GM12878 (cell line): ENCODE measurements at regions of chr1 and their contacts with region 1.

Region 1: DNA sequence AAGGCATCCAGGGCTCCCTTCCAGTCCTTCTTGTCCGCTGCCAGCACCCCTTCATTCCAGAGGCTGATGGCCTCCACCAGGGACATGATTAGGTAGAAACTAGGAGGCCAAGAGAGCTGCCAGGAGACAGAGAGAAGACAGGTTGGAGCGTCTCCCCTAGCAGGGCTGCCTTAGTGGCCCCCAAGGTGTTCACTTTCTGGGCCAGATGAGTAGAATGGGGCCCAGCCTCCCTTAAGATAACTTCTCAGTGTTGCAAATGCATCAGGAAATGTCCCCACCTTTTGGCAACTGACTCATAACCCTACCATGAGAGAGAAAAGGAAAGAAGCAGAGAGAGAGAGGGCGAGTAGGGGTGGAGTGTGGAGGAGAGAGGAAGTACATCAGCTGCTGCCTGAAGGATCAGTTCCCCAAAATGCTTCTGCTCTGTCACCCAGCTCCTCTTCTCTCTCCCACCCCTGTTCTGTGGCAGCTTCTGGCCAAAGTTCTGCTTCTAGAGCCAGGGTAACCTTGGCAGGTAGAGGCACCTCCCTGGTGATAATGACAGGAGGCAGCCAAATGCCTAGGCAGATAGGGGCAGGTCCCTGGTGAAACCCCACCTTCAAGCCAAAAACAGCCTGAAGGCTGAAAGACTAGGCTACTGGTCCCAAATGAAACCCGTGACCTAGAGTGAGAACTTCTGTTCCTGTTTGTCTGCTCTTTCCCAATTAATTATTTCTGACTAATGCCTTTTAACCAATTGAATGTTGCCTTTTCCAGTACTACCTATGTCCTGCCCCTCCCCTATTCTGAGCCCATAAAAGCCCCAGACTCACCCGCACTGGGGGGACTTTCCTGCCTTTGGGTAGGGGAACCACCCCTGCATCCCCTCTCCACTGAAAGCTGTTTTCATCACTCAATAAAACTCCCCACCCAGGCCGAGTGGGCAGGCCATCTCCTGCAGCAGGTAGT is at the start of gene NCF2:
- DNase-seq: peak; percentile 96
- ATAC-seq: peak; percentile 79
- H3K4me3 ChIP-seq: peak within 1 kb of the TSS; percentile 73
- H3K27ac ChIP-seq: peak within 1 kb of the TSS; percentile 95
- H3K4me1 ChIP-seq: peaks cover 48% of the 10 kb centered on the region
- H3K27me3 ChIP-seq: no peaks in the 10 kb centered on the region
- CTCF ChIP-seq: no peak
- EP300 ChIP-seq: peak; percentile 74 to 93
- POLR2A ChIP-seq: peak; percentile 64
- RAD21 ChIP-seq: peak; percentile 46; the same call in 1 of the 2 replicates
- polyA plus RNA-seq, gene NCF2: 31.4 to 61.2 TPM

Region 2: DNA sequence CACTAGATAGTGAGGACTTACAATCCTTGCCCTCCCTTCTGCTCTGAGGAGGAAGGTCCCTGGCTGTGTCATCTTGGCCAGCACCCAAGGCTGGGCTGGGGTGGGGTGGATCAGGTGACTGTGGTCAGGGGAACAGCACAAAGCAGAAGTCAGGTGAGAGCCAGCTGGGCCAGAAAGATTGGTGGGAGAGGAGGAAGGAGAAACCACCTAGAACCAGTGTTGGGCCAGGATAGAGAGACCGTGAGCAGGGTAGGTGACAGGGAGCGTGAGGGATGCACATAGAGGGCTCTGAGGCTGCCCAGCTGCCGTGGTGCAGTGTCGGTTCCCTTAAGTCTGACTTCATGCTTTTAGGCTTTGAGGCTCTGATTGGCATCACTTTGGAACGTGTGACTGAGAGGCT is 22.9 kb before region 1 on chr1:
- CTCF ChIA-PET with region 1: interaction called, 5 read pairs
- POLR2A ChIA-PET with region 1: interaction called, 4 read pairs
- RAD21 ChIA-PET with region 1: interaction called, 10 read pairs
- SMC1A ChIA-PET with region 1: interaction called, 37 read pairs
- in situ Hi-C with region 1: no loop called
- intact Hi-C with region 1: no loop called
- DNase-seq: peak; percentile 17
- ATAC-seq: peak; percentile 80
- H3K4me3 ChIP-seq: no peak overlapping the region
- H3K27ac ChIP-seq: no peak overlapping the region
- H3K4me1 ChIP-seq: peaks cover 9% of the 10 kb centered on the region
- H3K27me3 ChIP-seq: no peaks in the 10 kb centered on the region
- CTCF ChIP-seq: no peak
- EP300 ChIP-seq: no peak
- POLR2A ChIP-seq: no peak
- RAD21 ChIP-seq: no peak

Region 3: DNA sequence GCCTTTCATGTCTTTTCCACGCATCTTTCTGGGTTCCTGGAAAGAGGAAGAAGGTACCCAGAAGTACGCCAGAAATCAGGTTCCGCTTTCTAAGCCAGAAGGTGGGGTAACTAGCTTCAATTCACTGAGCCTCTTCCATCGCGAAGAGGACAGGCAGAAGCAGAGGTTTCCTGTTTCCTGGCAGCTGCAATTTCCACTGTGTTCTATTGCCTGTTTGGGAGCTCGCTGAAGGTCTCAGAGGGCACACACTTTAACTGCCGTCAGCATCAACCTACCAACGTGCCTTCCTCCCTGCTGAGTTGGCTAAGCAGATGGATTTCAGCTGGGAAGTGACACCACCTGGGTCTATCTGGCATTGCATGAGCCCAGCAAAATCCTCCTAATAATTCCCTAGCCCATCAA is 10.2 kb before region 1 on chr1:
- CTCF ChIA-PET with region 1: interaction called, 18 read pairs
- POLR2A ChIA-PET with region 1: interaction called, 13 read pairs
- RAD21 ChIA-PET with region 1: interaction called, 12 read pairs
- SMC1A ChIA-PET with region 1: interaction called, 50 read pairs
- in situ Hi-C with region 1: no loop called
- intact Hi-C with region 1: no loop called
- DNase-seq: no peak
- ATAC-seq: peak; percentile 63
- H3K4me3 ChIP-seq: no peak overlapping the region
- H3K27ac ChIP-seq: no peak overlapping the region
- H3K4me1 ChIP-seq: peaks cover 7% of the 10 kb centered on the region
- H3K27me3 ChIP-seq: no peaks in the 10 kb centered on the region
- CTCF ChIP-seq: peak; percentile 34; a peak in 4 of 6 replicates
- EP300 ChIP-seq: no peak
- POLR2A ChIP-seq: no peak
- RAD21 ChIP-seq: peak; percentile 32; the same call in 1 of the 2 replicates

Region 4: DNA sequence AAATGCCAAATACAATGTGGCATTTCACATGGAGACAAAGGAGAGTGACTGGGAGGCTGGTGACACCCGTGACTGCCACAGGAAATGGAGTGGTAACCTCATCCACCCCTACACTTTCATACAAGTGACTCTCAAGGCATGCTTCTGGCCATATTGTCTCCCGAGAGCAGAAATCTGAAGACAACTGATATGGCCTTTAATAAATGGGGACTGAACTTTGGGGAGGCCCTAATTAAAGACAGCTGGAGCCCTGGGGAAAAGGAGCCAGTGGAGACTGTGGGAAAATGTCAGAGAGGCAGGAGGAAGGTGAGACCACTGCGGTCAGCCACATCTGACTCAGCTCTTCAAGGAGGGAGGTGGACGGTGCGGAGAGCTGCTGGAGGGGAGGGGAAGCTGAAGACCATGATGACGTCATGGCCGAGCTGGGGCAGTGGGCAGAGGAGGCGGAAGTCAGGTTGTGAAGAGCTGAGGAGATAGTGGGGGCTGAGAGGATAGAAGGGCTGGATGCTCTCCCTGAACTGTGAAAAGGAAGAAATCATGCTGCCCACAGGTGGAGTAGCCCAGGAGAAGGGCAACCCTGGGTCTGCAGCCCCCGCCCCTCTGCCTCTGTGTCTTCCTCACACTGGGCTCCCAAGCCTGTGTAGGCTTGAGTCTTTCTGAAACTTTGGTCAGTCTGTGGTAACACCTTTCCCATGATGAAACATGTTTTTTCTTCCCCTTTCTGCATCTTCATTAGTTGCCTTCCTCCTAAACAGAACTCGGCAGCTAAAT is 13.7 kb after region 1 on chr1:
- CTCF ChIA-PET with region 1: interaction called, 152 read pairs
- POLR2A ChIA-PET with region 1: interaction called, 199 read pairs
- RAD21 ChIA-PET with region 1: interaction called, 188 read pairs
- SMC1A ChIA-PET with region 1: interaction called, 363 read pairs
- in situ Hi-C with region 1: no loop called
- intact Hi-C with region 1: loop called (anchors 1 kb)
- DNase-seq: peak; percentile 89
- ATAC-seq: peak; percentile 71
- H3K4me3 ChIP-seq: no peak overlapping the region
- H3K27ac ChIP-seq: peak overlapping the region; percentile 64
- H3K4me1 ChIP-seq: peaks cover 61% of the 10 kb centered on the region
- H3K27me3 ChIP-seq: no peaks in the 10 kb centered on the region
- CTCF ChIP-seq: no peak
- EP300 ChIP-seq: peak; percentile 25 to 72; a peak in 2 of 4 replicates
- POLR2A ChIP-seq: no peak
- RAD21 ChIP-seq: no peak

Region 5: DNA sequence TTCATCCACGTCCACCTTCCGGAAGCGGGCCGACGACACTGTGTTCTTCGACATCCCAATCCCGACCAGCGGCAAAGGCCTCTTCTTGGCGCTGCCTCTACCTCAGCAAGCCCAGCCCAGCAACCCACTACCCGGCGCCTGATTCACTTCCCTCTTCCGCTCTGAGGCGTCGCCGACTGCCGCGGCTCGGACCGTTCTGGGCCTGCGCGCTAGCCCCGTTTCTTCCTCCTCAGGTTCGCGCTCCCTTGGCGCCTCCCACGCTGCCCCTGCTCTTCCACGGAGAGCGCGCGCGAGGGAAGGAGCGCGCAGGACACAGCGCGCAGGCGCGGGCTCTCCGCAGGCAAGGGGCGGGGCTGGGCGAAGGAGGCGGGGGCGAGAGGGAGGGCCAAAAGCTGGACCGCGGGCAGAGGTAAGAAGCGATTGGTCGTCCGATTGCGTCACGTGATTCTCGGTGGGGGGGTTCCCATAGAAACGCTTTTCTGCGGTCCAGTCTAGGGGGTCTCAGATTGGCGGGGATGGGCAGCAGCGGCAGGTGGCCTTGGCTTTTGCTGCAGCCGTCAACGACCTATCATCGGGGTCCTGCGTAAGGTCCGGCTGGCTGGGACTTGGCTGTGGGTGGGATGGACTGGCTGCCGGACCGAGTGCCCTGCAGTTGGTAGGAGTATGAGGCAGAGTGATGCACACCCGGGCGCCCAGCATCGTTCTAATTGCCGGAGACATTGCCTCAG is 45.3 kb after region 1 on chr1 and contains the start of gene ARPC5:
- CTCF ChIA-PET with region 1: interaction called, 10 read pairs
- POLR2A ChIA-PET with region 1: interaction called, 5 read pairs
- RAD21 ChIA-PET with region 1: interaction called, 23 read pairs
- SMC1A ChIA-PET with region 1: interaction called, 17 read pairs
- in situ Hi-C with region 1: no loop called
- intact Hi-C with region 1: loop called (anchors 1 kb)
- DNase-seq: peak; percentile 95
- ATAC-seq: peak; percentile 86
- H3K4me3 ChIP-seq: peak within 1 kb of the TSS; percentile 93
- H3K27ac ChIP-seq: peak within 1 kb of the TSS; percentile 96
- H3K4me1 ChIP-seq: 0 out of 2 replicates have a peak, but pooled peaks cover 3% of the 10 kb centered on the region
- H3K27me3 ChIP-seq: no peaks in the 10 kb centered on the region
- CTCF ChIP-seq: no peak
- EP300 ChIP-seq: no peak
- POLR2A ChIP-seq: peak; percentile 93
- RAD21 ChIP-seq: no peak
- polyA plus RNA-seq, gene ARPC5: 246 to 274 TPM

Region 6: GRCh38 chr1:183761871-183762270 is 171.4 kb after region 1 on chr1:
- CTCF ChIA-PET with region 1: no interaction called
- POLR2A ChIA-PET with region 1: no interaction called
- RAD21 ChIA-PET with region 1: no interaction called
- SMC1A ChIA-PET with region 1: no interaction called
- in situ Hi-C with region 1: no loop called
- intact Hi-C with region 1: no loop called
- DNase-seq: no peak
- ATAC-seq: no peak
- H3K4me3 ChIP-seq: no peak overlapping the region
- H3K27ac ChIP-seq: no peak overlapping the region
- H3K4me1 ChIP-seq: no peaks in the 10 kb centered on the region
- H3K27me3 ChIP-seq: no peaks in the 10 kb centered on the region
- CTCF ChIP-seq: no peak
- EP300 ChIP-seq: no peak
- POLR2A ChIP-seq: no peak
- RAD21 ChIP-seq: no peak

Region 7: GRCh38 chr1:183800451-183800850 is 209.9 kb after region 1 on chr1:
- CTCF ChIA-PET with region 1: no interaction called
- POLR2A ChIA-PET with region 1: no interaction called
- RAD21 ChIA-PET with region 1: no interaction called
- SMC1A ChIA-PET with region 1: no interaction called
- in situ Hi-C with region 1: no loop called
- intact Hi-C with region 1: no loop called
- DNase-seq: no peak
- ATAC-seq: no peak
- H3K4me3 ChIP-seq: no peak overlapping the region
- H3K27ac ChIP-seq: no peak overlapping the region
- H3K4me1 ChIP-seq: no peaks in the 10 kb centered on the region; the same call in 1 of the 2 replicates
- H3K27me3 ChIP-seq: no peaks in the 10 kb centered on the region
- CTCF ChIP-seq: no peak
- EP300 ChIP-seq: no peak
- POLR2A ChIP-seq: no peak
- RAD21 ChIP-seq: no peak

Region 8: GRCh38 chr1:183896466-183897048 is 306.0 kb after region 1 on chr1:
- CTCF ChIA-PET with region 1: no interaction called
- POLR2A ChIA-PET with region 1: no interaction called
- RAD21 ChIA-PET with region 1: no interaction called
- SMC1A ChIA-PET with region 1: no interaction called
- in situ Hi-C with region 1: no loop called
- intact Hi-C with region 1: loop called (anchors 5 kb)
- DNase-seq: no peak
- ATAC-seq: peak; percentile 27
- H3K4me3 ChIP-seq: no peak overlapping the region; the same call in 1 of the 2 replicates
- H3K27ac ChIP-seq: peak overlapping the region; percentile 97
- H3K4me1 ChIP-seq: peaks cover 80% of the 10 kb centered on the region
- H3K27me3 ChIP-seq: no peaks in the 10 kb centered on the region
- CTCF ChIP-seq: no peak
- EP300 ChIP-seq: no peak
- POLR2A ChIP-seq: no peak
- RAD21 ChIP-seq: no peak